ENCODE measurements at regions of chr7 and their contacts with region 1.

Region 1: GRCh38 chr7:3092468-3092867 is 48.8 kb upstream of the CARD11 start:
- DNase-seq: no peak
- H3K4me3 ChIP-seq: no peak overlapping the region
- H3K27ac ChIP-seq: no peak overlapping the region
- H3K4me1 ChIP-seq: peaks cover 0 to 2% (median under 1%) of the 10 kb centered on the region in 4 experiments; a peak in 2 of 7 replicates
- H3K27me3 ChIP-seq: no peaks in the 10 kb centered on the region
- CTCF ChIP-seq: no peak
- EP300 ChIP-seq: no peak
- POLR2A ChIP-seq: no peak
- RAD21 ChIP-seq: no peak

Region 2: DNA sequence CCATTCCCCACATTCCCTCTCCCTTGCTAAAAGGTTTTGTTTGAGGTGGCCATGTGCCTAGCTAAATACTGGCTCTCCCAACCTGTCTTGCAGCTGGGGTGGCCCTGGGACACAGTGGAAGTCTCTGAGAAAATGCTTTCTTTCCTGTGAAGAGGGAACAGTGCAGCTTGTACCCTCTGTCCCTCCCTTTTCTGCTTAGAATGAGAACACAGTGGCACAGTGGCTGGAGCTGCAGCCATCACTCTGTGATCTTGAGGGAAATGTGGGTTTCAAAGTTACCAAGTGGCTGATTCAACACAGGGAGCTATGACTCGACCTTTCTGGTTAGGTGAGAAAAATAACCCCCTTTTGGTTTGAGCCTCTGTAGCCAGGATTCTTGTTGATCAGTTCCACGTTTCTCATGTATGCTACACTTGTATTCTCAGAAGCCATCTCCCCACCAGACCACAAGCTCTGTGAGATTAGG is 13.9 kb after region 1 on chr7:
- CTCF ChIA-PET with region 1: interaction called, 40 read pairs
- POLR2A ChIA-PET with region 1: no interaction called
- DNase-seq: no peak
- H3K4me3 ChIP-seq: no peak overlapping the region
- H3K27ac ChIP-seq: no peak overlapping the region
- H3K4me1 ChIP-seq: no peaks in the 10 kb centered on the region
- H3K27me3 ChIP-seq: no peaks in the 10 kb centered on the region; a peak in 1 of 7 replicates
- CTCF ChIP-seq: no peak
- EP300 ChIP-seq: no peak
- POLR2A ChIP-seq: no peak
- RAD21 ChIP-seq: no peak

Region 3: DNA sequence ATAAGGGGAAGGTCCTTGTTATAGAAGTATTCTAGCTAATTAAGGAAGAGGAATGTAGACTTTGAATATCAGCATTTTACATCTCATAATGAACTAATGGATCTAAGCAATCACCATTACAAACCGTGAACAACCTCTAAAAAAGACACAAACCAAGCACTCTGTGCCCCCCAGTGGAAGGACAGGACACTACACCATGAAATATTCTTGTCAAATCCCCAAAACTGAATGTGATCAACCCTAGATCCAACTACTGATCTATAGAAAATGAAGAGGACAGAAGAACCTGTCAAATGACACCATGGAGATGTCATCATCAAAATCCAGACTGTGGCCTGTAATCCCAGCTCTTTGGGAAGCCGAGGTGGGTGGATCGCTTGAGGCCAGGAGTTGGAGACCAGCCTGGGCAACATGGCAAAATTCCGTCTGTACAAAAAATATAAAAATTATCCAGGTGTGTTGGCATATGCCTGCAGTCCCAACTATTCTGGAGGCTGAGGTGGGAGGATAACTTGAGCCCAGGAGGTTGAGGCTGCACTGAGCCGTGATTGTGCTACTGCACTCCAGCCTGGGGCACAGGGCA is 62.5 kb after region 1 on chr7:
- CTCF ChIA-PET with region 1: interaction called, 10 read pairs
- POLR2A ChIA-PET with region 1: no interaction called
- DNase-seq: no peak
- H3K4me3 ChIP-seq: no peak overlapping the region
- H3K27ac ChIP-seq: no peak overlapping the region
- H3K4me1 ChIP-seq: peaks cover 0 to 6% (median 2%) of the 10 kb centered on the region in 4 experiments; a peak in 3 of 7 replicates
- H3K27me3 ChIP-seq: no peaks in the 10 kb centered on the region
- CTCF ChIP-seq: peak in 2 of 3 experiments; percentile 59 to 74; a peak in 3 of 4 replicates
- EP300 ChIP-seq: no peak
- POLR2A ChIP-seq: no peak
- RAD21 ChIP-seq: peak; percentile 81 to 84

Region 4: DNA sequence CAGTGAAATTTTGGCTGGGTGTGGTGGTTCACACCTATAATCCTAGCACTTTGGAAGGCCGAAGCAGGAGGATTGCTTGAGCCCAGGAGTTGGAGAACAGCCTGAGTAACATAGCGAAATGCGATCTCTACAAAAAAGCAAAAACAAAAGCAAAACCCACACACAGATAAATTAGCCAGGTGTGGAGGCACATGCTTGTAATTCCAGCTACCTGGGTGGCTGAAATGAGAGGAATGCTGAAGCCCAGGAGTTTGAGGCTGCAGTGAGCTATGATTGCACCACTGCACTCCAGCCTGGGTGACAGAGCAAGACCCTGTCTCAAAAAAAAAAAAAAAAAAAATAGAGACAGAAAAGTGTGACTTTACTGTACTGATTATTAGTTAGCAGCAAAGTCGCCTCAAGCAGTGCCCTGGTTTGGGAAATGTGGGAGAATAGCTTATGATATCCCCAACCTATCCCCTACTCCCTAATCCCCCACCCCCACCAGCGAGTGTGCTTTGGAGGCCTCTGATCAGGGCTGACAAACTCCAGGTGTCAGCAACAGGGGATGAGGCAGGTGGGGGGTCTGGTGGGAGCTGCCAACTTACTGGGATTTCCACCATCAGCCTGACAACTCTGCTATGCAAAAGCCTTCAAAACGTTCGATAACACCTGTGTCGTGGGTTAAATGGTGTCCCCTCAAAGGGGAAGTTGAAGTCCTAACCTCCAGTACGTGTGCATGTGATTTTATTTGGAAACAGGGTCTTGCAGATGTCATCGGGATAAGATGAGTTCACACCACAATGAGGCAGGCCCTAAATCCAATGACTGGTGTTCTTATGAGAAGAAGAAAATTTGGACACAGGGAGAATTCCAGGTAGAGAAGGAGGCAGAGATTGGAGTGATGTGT is 83.9 kb after region 1 on chr7:
- CTCF ChIA-PET with region 1: interaction called, 10 read pairs
- POLR2A ChIA-PET with region 1: no interaction called
- DNase-seq: peak in 1 of 2 experiments; percentile 27
- H3K4me3 ChIP-seq: no peak overlapping the region
- H3K27ac ChIP-seq: no peak overlapping the region
- H3K4me1 ChIP-seq: peaks cover 0 to 9% (median 4%) of the 10 kb centered on the region in 4 experiments; a peak in 5 of 7 replicates
- H3K27me3 ChIP-seq: no peaks in the 10 kb centered on the region
- CTCF ChIP-seq: no peak
- EP300 ChIP-seq: no peak; a peak in 1 of 3 replicates
- POLR2A ChIP-seq: no peak
- RAD21 ChIP-seq: no peak